ENCODE measurements at regions of chr7 and their contacts with region 1.

Region 1: GRCh38 chr7:33477719-33478480 is 348.5 kb downstream of the BBS9 start:
- DNase-seq: no peak

Region 2: DNA sequence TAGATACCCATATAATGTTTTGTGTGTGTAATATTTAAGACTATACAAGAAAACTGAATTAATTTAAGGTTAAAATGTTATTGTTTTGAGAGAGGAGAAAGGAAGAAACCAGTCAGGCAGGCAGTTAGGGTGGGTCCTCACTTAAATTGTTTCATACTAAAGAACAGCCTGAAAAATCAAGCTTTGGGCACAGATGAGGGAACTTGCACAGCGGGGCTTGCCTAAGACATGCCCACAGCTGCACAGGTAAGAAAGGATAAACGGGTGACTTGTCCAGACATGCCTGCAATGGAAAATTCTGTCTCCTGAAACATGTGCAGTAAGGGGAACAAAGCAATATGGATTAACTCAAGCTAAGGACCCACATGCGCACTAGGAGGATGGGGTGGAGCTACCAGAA is 190.2 kb before region 1 on chr7:
- CTCF ChIA-PET with region 1: no interaction called
- POLR2A ChIA-PET with region 1: no interaction called
- DNase-seq: no peak

Region 3: GRCh38 chr7:33379891-33380543 is 97.9 kb before region 1 on chr7:
- CTCF ChIA-PET with region 1: no interaction called
- POLR2A ChIA-PET with region 1: no interaction called
- DNase-seq: no peak

Region 4: GRCh38 chr7:33392148-33392547 is 85.8 kb before region 1 on chr7:
- CTCF ChIA-PET with region 1: no interaction called
- POLR2A ChIA-PET with region 1: no interaction called
- DNase-seq: no peak

Region 5: GRCh38 chr7:33423646-33424020 is 54.3 kb before region 1 on chr7:
- CTCF ChIA-PET with region 1: interaction called, 13 read pairs
- POLR2A ChIA-PET with region 1: no interaction called
- DNase-seq: no peak

Region 6: GRCh38 chr7:33448035-33448434 is 29.9 kb before region 1 on chr7:
- CTCF ChIA-PET with region 1: no interaction called
- POLR2A ChIA-PET with region 1: no interaction called
- DNase-seq: no peak